ENCODE measurements at regions of chr18 and their contacts with region 1.

Region 1: DNA sequence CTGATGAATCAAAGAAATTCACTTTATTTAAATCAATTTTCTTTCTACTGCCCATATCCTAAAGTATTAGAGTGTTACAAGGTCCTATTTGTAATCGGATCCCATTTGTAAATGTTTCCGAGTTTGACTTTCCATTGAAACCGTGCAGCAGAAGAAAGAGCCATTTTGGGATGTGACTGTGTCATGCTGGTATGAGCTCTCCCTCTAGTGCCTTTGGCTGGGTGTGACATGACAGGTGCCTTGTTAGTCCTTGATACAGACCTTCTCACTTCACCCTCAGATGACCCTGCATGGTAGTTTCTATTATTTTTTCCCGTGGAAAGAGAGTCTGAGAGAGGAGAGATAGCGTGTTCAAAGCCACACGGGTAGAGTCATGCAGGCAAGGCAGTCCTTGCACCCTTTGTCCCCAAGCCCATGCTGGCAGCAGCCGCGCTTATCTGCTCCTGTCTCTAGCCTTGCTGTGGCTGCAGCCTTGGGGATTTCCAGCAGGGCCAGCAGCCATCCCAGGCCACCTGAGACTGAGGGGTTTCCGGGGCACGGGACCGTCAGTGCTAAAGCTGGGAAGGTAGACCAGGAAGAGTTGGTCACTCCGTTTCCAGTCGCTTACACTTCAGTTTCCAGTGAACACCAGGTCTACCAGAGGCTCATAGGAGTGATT is 21.4 kb downstream of the CHMP1B start:
- DNase-seq: no peak
- ATAC-seq: peak; percentile 86

Region 2: GRCh38 chr18:11654736-11655605 is 217.6 kb before region 1 on chr18:
- intact Hi-C with region 1: loop called (anchors 5 kb)
- DNase-seq: peak; percentile 75
- ATAC-seq: no peak

Region 3: DNA sequence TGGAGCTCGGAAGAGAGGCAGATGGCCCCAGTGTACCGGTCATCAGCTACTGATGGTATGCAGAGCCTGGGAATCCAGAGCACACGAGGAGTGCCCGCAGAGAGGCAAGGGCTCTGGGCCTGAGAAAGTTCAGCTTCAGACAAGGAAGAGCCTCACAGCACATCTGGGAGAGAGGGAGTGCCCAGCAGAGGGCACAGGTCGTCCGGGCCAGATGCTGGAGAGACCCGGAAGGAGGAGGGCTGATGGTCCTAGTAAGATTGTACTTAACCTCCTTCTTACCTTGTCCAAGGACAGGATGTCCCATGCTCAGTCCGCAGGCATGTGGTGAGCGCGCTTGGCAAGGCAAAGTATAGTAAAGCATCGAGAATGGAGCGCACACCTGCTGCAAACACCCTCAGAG is 45.8 kb before region 1 on chr18:
- intact Hi-C with region 1: no loop called
- DNase-seq: no peak
- ATAC-seq: no peak

Region 4: GRCh38 chr18:11887305-11888262 is 15.0 kb after region 1 on chr18:
- intact Hi-C with region 1: no loop called
- DNase-seq: no peak
- ATAC-seq: no peak